MCF 10A (cell line): ENCODE measurements at regions of chr1 and their contacts with region 1.

Region 1: DNA sequence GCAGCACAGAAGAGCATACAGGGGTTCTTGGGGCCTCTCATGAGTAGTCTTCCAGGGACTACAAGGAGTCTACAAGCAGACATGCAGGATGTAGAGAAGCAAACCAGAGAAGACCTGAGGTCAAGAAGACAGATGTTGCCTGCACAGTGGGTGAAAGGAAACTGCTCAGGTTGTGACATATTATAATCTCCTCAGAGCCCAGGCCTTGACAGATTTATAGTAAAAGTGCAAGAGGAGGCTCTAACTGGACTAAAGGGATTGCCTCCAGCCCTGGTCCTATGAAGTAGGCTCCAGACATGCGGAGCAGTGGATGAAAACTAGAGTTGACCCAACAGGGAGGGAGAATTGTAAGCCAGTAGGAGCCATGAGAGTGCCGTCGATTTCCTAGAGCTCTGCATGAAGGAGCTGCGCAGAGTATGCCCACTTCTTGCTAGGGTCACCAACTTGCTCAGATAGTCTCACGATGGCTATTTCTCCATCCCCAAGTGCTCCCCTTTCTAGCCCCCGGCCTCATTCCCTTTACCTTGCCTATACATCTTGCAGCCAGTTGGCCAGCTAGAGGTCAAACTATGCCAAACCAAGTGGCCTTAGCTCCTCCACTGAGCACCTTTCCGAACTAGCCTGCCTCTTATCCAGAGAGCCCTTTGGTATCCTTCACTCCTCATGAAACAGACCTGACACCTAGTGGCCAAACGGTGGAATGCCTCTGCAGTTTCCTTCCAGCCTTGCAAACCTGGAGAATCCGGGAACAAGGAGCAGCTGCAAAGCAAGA is 36.2 kb upstream of the IPO9 start:
- DNase-seq: peak; percentile 96
- H3K4me3 Mint-ChIP-seq: no peak overlapping the region
- H3K27ac Mint-ChIP-seq: no peak overlapping the region
- H3K4me1 Mint-ChIP-seq: peaks cover 32% of the 10 kb centered on the region
- H3K27me3 Mint-ChIP-seq: no peaks in the 10 kb centered on the region
- CTCF ChIP-seq: peak; percentile 100

Region 2: DNA sequence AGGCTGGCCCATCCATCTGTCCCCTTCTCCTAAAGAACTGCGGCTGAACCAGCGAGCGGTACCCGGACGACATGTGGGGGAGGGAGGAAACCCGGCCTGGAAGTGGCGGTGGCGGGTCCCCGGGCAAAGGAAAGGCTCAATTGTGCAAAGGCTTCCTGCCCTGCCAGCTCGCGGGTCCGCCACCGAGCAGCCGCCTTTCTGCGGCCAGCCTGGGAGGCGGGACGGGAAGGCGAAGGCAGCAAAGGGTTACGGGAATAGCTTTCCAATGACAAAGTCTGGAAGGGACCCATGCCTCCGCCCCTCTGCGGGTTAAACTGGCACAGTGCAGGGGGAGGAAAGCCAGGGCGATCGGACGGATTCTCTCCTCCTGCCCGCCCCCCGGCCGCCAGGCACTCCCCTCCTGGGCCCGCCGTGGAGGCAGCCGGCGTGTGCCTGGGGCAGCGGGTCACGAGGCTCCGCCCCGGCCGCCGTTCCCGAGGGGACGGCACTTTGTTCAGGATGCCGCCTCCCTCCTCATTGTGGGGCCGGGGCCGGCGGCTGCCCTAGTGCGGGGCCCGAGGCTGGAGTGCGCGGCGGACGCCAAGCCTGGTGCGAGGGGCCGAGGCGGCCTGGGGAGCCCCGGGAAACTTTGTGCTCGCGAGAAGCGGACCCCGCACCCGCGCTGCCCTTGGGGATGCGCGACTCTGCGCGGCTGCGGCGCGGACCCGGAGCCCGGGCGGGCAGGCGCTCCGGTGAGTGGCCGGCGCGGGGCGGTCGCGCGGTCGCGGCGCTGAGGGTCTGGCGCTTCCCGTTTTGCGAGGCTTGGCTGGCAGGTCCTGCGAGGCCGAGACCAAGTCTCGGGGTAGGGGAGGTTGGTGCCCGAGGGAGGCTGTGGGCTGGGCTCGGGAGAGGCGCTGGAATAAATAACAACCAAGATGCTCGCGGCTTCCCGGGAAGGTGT is 253.8 kb before region 1 on chr1 and contains the start of gene NAV1:
- CTCF ChIA-PET with region 1: interaction called, 29 read pairs
- POLR2A ChIA-PET with region 1: interaction called, 3 read pairs
- intact Hi-C with region 1: no loop called
- DNase-seq: peak; percentile 56
- H3K4me3 Mint-ChIP-seq: peak within 1 kb of the TSS; percentile 70
- H3K27ac Mint-ChIP-seq: no peak within 1 kb of the TSS
- H3K4me1 Mint-ChIP-seq: peaks cover 35% of the 10 kb centered on the region
- H3K27me3 Mint-ChIP-seq: no peaks in the 10 kb centered on the region
- CTCF ChIP-seq: no peak
- total RNA-seq, gene NAV1: 31.4 and 34.9 TPM in 2 replicates

Region 3: DNA sequence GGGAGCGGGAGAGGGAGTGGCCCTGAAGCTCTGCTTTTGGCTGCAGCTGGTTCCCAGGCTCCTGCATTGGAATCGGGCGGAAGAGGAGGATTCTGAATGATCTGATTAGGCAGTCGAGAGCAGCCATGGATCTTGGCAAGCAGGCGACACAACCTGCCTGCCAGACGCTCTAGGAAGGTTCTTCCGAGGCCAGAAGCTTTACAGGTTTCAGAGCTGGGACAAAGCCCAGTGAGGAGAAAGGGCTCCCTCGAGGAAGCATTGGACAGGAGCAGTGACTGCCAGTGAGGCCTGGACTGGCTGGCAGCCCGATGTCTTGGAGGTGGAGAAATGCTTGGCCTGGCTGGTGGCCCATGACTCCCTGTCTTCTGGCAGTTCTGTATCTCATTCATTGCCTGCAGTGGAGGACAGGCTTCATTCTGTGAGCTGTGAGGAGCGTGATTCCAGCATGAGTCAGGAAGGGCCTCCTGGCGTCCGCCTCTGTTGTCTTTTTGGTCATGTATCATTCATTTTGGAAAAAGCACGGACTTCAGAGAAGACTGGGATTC is 96.4 kb before region 1 on chr1:
- CTCF ChIA-PET with region 1: interaction called, 14 read pairs
- POLR2A ChIA-PET with region 1: interaction called, 3 read pairs
- intact Hi-C with region 1: no loop called
- DNase-seq: peak; percentile 100
- H3K4me3 Mint-ChIP-seq: peak overlapping the region; percentile 28
- H3K27ac Mint-ChIP-seq: peak overlapping the region; percentile 44
- H3K4me1 Mint-ChIP-seq: peaks cover 32% of the 10 kb centered on the region
- H3K27me3 Mint-ChIP-seq: no peaks in the 10 kb centered on the region
- CTCF ChIP-seq: peak; percentile 6

Region 4: DNA sequence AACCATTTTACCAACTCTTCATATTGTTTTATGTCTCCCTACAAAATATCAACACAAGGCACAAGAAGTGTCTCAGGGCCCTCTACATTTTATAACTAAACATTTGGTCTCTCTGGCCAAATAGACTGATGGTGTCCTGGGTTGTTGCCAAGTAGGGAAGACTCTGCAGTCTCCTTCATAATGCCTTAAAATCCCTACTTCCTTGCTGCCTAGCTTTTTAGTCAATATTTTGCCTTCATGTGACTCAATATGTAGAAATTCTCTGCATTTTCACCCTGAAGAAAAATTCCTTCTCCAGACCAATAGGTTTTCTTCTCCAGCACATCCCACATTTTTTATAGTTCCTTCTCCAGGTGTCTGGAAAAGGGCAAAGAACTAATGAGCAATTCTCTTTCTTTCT is 36.3 kb before region 1 on chr1:
- CTCF ChIA-PET with region 1: interaction called, 61 read pairs
- POLR2A ChIA-PET with region 1: interaction called, 3 read pairs
- intact Hi-C with region 1: no loop called
- DNase-seq: no peak
- H3K4me3 Mint-ChIP-seq: no peak overlapping the region
- H3K27ac Mint-ChIP-seq: no peak overlapping the region
- H3K4me1 Mint-ChIP-seq: peaks cover 42% of the 10 kb centered on the region
- H3K27me3 Mint-ChIP-seq: no peaks in the 10 kb centered on the region
- CTCF ChIP-seq: no peak

Region 5: GRCh38 chr1:201807958-201808632 is 15.4 kb after region 1 on chr1:
- CTCF ChIA-PET with region 1: interaction called, 28 read pairs
- POLR2A ChIA-PET with region 1: interaction called, 3 read pairs
- intact Hi-C with region 1: no loop called
- DNase-seq: no peak
- H3K4me3 Mint-ChIP-seq: no peak overlapping the region
- H3K27ac Mint-ChIP-seq: no peak overlapping the region
- H3K4me1 Mint-ChIP-seq: no peaks in the 10 kb centered on the region
- H3K27me3 Mint-ChIP-seq: no peaks in the 10 kb centered on the region
- CTCF ChIP-seq: no peak

Region 6: DNA sequence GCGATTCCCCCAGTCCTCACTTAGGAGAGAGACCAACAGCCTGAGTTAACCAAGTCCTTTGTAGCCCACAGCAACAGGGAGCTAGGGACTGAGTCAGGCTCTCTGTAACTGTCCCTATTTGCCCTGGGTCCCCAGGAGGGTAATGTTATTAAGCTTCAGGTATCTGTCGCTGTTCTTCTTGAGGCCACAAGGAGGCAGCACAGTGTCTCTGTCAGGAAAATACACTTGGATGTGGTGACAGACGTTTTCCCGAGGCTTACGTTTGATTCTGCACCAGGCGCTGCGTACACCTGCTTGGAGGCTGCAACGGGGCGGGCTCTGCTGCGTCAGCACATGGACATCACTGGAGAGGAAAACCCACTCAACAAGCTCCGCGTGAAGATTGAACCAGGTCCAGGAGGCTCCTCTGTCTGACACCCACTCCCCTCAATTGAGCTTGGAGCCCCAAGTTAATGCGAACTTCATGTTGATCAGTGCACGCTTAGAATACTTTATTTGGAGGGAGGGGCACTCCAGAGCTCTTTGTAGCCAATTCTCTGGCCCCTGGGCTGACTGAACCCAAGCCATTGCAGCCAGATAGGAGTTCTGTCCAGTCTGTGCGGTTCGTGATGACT is 207.0 kb after region 1 on chr1:
- CTCF ChIA-PET with region 1: no interaction called
- POLR2A ChIA-PET with region 1: no interaction called
- intact Hi-C with region 1: no loop called
- DNase-seq: peak; percentile 81
- H3K4me3 Mint-ChIP-seq: no peak overlapping the region
- H3K27ac Mint-ChIP-seq: no peak overlapping the region
- H3K4me1 Mint-ChIP-seq: no peaks in the 10 kb centered on the region
- H3K27me3 Mint-ChIP-seq: no peaks in the 10 kb centered on the region
- CTCF ChIP-seq: peak; percentile 78

Region 7: GRCh38 chr1:202688375-202688774 is 895.7 kb after region 1 on chr1:
- CTCF ChIA-PET with region 1: no interaction called
- POLR2A ChIA-PET with region 1: no interaction called
- intact Hi-C with region 1: no loop called
- DNase-seq: peak; percentile 62
- H3K4me3 Mint-ChIP-seq: no peak overlapping the region
- H3K27ac Mint-ChIP-seq: no peak overlapping the region
- H3K4me1 Mint-ChIP-seq: no peaks in the 10 kb centered on the region
- H3K27me3 Mint-ChIP-seq: peaks cover 99% of the 10 kb centered on the region
- CTCF ChIP-seq: no peak